ENCODE measurements at regions of chr7 and their contacts with region 1.

Region 1: GRCh38 chr7:97117372-97118188 is at the start of gene SDHAF3:
- DNase-seq: peak in 1 of 2 donors; percentile 98
- H3K4me3 ChIP-seq: peak within 1 kb of the TSS; percentile 71
- H3K27ac ChIP-seq: peak within 1 kb of the TSS; percentile 60
- H3K4me1 ChIP-seq: peaks cover 14% of the 10 kb centered on the region
- H3K27me3 ChIP-seq: no peaks in the 10 kb centered on the region
- CTCF ChIP-seq: no peak
- POLR2A ChIP-seq: no peak
- total RNA-seq, gene SDHAF3: 9.6 TPM

Region 2: GRCh38 chr7:97179454-97180104 is 62.0 kb after region 1 on chr7:
- intact Hi-C with region 1: loop called (anchors 5 kb)
- DNase-seq: no peak
- H3K4me3 ChIP-seq: no peak overlapping the region
- H3K27ac ChIP-seq: no peak overlapping the region
- H3K4me1 ChIP-seq: no peaks in the 10 kb centered on the region
- H3K27me3 ChIP-seq: no peaks in the 10 kb centered on the region
- CTCF ChIP-seq: peak; percentile 20 to 56 (median 37)
- POLR2A ChIP-seq: no peak

Region 3: GRCh38 chr7:97835296-97836138 is 717.9 kb after region 1 on chr7:
- intact Hi-C with region 1: no loop called
- DNase-seq: no peak
- H3K4me3 ChIP-seq: no peak overlapping the region
- H3K27ac ChIP-seq: no peak overlapping the region
- H3K4me1 ChIP-seq: no peaks in the 10 kb centered on the region
- H3K27me3 ChIP-seq: no peaks in the 10 kb centered on the region
- CTCF ChIP-seq: peak in 2 of 3 experiments; percentile 24 to 50
- POLR2A ChIP-seq: no peak